K562 (cell line): ENCODE measurements at regions of chr1 and their contacts with region 1.

Region 1: GRCh38 chr1:236795035-236795756 is at the start of gene MTR:
- DNase-seq: peak; percentile 99 to 100 (median 100)
- ATAC-seq: peak; percentile 99
- H3K4me3 ChIP-seq: peak within 1 kb of the TSS; percentile 58
- H3K27ac ChIP-seq: peak within 1 kb of the TSS; percentile 79
- H3K4me1 ChIP-seq: peaks cover 10 to 13% of the 10 kb centered on the region in 2 experiments; a peak in 4 of 5 replicates
- H3K27me3 ChIP-seq: peaks cover 0 to 2% of the 10 kb centered on the region in 2 experiments; a peak in 2 of 5 replicates
- CTCF ChIP-seq: peak in 2 of 3 experiments; percentile 0 to 4; a peak in 1 of 6 replicates
- EP300 ChIP-seq: peak; percentile 33; the same call in 1 of the 2 replicates
- POLR2A ChIP-seq: peak; percentile 98
- RAD21 ChIP-seq: peak in 1 of 2 experiments; percentile 3; a peak in 1 of 4 replicates
- polyA plus RNA-seq, gene MTR: 3.4 to 5.1 TPM

Region 2: GRCh38 chr1:236810018-236810417 is 14.8 kb after region 1 on chr1:
- CTCF ChIA-PET with region 1: no interaction called
- POLR2A ChIA-PET with region 1: interaction called, 13 read pairs
- in situ Hi-C with region 1: no loop called
- intact Hi-C with region 1: no loop called
- DNase-seq: no peak
- ATAC-seq: no peak
- H3K4me3 ChIP-seq: no peak overlapping the region
- H3K27ac ChIP-seq: no peak overlapping the region
- H3K4me1 ChIP-seq: peaks cover 0 to 3% of the 10 kb centered on the region in 2 experiments; a peak in 2 of 5 replicates
- H3K27me3 ChIP-seq: no peaks in the 10 kb centered on the region
- CTCF ChIP-seq: no peak
- EP300 ChIP-seq: no peak
- POLR2A ChIP-seq: no peak
- RAD21 ChIP-seq: no peak